ENCODE measurements at regions of chr11 and their contacts with region 1.

Region 1: GRCh38 chr11:95567685-95568084 is 221.9 kb downstream of the FAM76B start:
- DNase-seq: no peak
- H3K4me3 ChIP-seq: no peak overlapping the region
- H3K27ac ChIP-seq: no peak overlapping the region
- H3K4me1 ChIP-seq: peaks cover 4 to 27% (median 20%) of the 10 kb centered on the region in 4 donors
- H3K27me3 ChIP-seq: no peaks in the 10 kb centered on the region
- CTCF ChIP-seq: no peak
- EP300 ChIP-seq: no peak
- POLR2A ChIP-seq: no peak

Region 2: DNA sequence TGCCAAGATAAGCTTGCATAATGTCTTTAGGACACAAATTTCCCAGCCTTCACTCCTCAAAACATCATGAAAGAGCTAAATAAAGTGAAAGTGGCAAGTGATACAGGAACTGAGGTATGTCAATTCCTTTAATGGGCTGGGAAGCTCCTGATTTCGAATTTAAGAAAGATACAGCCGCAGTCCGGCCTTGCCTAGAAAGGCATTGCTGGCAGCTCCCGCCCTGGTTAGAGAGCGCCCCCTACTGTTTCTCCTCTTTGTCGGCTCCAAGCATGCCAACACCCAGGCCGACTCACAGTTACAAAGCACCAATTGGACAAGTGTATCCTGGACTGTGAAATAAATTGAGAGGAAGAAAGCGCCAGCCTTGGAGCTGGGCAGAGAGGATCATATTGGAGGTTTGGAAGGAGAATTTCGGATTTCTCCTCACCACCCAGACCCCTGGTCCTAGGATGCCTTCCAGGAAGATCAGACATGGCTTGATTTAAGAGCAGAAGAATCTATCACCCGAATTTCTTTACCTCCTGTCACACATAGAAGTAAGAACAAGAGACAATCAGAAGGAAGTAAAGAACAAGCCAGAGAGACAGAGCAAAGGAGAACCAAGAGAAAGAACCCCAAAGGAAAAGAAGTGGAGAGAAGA is 137.9 kb after region 1 on chr11:
- intact Hi-C with region 1: loop called (anchors 10 kb)
- DNase-seq: peak; percentile 95
- H3K4me3 ChIP-seq: no peak overlapping the region
- H3K27ac ChIP-seq: peak overlapping the region; percentile 67 to 79 (median 68)
- H3K4me1 ChIP-seq: peaks cover 12 to 57% (median 53%) of the 10 kb centered on the region in 4 donors
- H3K27me3 ChIP-seq: no peaks in the 10 kb centered on the region
- CTCF ChIP-seq: peak; percentile 90 to 93 (median 91)
- EP300 ChIP-seq: no peak
- POLR2A ChIP-seq: no peak